Activated T-helper 1 cell treated with anti-CD3 and anti-CD28 coated beads, Interleukin-12 subunit alpha, Interleukin-12 subunit beta, Interleukin-2, Interleukin-4 antibody, amounts not matched to agents 30 ng/mL and 10 ng/mL and 1 ng/mL, durations not matched to agents 14 hours and 24 hours and 36 hours (primary cell): ENCODE measurements at regions of chr10 and their contacts with region 1.

Region 1: DNA sequence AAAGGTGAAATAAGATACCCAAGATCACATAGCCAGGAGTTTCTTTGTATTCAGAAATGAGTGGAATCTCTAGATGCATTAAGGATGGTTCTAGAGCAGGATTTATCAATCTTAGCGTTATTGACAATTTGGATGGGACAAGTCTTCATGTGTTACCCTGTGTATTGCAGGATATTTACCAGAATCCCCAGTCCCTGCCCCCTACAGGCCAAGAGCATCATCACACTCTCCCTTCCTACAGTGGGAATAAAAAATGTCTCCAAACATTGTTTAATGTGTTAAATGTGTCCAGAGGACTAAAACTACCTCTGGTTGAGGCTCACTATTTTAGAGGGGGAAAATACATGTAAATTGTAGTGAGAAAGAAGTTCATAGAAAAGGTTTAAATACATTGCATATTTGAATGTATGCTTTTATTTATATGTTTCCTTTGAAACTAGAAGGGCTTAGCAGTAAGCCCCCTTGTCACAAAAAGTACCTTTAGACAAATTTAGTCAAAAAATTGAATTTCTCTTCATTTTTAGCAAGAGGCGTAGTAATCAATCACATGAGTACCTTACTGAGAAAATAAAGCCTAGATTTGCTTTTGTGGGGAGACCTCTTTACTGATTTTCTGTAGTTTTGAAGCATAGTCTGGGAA is 141.2 kb downstream of the MLLT10 start:
- DNase-seq: peak; percentile 4
- H3K4me3 Mint-ChIP-seq: no peak overlapping the region
- H3K27ac Mint-ChIP-seq: no peak overlapping the region
- H3K4me1 Mint-ChIP-seq: peaks cover 7% of the 10 kb centered on the region
- H3K27me3 Mint-ChIP-seq: no peaks in the 10 kb centered on the region

Region 2: GRCh38 chr10:21634599-21635365 is 40.5 kb before region 1 on chr10:
- intact Hi-C with region 1: loop called (anchors 5 kb)
- DNase-seq: no peak
- H3K4me3 Mint-ChIP-seq: no peak overlapping the region
- H3K27ac Mint-ChIP-seq: peak overlapping the region; percentile 41
- H3K4me1 Mint-ChIP-seq: peaks cover 25% of the 10 kb centered on the region
- H3K27me3 Mint-ChIP-seq: no peaks in the 10 kb centered on the region

Region 3: DNA sequence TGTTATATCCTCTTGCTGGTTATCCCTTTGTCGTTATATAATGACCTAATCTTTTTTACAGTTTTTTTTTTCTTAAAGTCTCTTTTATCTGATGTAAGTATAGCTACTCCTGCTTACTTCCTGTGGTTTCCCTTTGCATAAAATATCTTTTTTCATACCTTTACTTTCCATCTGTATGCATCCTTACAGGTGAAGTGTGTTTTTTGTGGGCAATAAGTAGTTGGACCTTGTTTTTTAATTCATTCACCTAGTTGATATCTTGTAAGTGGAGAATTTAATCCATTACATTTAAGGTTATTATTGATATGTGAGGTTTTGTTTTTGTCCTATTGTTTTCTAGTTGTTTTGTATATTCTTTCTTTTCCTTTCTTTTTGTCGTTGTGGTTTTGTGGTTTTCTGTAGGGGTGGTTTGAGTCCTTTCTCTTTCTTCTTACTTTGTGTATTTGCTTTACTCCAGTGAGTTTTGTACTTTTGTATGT is 27.4 kb after region 1 on chr10:
- intact Hi-C with region 1: loop called (anchors 2 kb)
- DNase-seq: no peak
- H3K4me3 Mint-ChIP-seq: peak overlapping the region; percentile 19
- H3K27ac Mint-ChIP-seq: peak overlapping the region; percentile 71
- H3K4me1 Mint-ChIP-seq: peaks cover 21% of the 10 kb centered on the region
- H3K27me3 Mint-ChIP-seq: peaks cover 4% of the 10 kb centered on the region